Natural killer cell (primary cell): ENCODE measurements at regions of chr11 and their contacts with region 1.

Region 1: GRCh38 chr11:57530596-57531507 is at the start of gene TIMM10:
- DNase-seq: peak; percentile 74 to 97
- ATAC-seq: peak; percentile 81 to 93 (median 87)
- H3K4me3 ChIP-seq: peak within 1 kb of the TSS; percentile 65
- H3K4me3 Mint-ChIP-seq: peak within 1 kb of the TSS; percentile 99
- H3K27ac ChIP-seq: peak within 1 kb of the TSS; percentile 78
- H3K27ac Mint-ChIP-seq: peak within 1 kb of the TSS; percentile 97 to 99
- H3K4me1 ChIP-seq: peaks cover 15% of the 10 kb centered on the region
- H3K4me1 Mint-ChIP-seq: peaks cover 30 to 36% of the 10 kb centered on the region in 2 donors
- H3K27me3 ChIP-seq: no peaks in the 10 kb centered on the region
- H3K27me3 Mint-ChIP-seq: no peaks in the 10 kb centered on the region
- CTCF ChIP-seq: no peak
- total RNA-seq, gene TIMM10: 15.0 to 18.8 (median 17.1) TPM

Region 2: GRCh38 chr11:57345555-57346211 is 185.2 kb before region 1 on chr11:
- intact Hi-C with region 1: loop called (anchors 1 kb)
- DNase-seq: peak; percentile 57 to 88
- ATAC-seq: peak; percentile 69 to 87 (median 86)
- H3K4me3 ChIP-seq: no peak overlapping the region
- H3K4me3 Mint-ChIP-seq: no peak overlapping the region
- H3K27ac ChIP-seq: no peak overlapping the region
- H3K27ac Mint-ChIP-seq: no peak overlapping the region
- H3K4me1 ChIP-seq: peaks cover 17% of the 10 kb centered on the region
- H3K4me1 Mint-ChIP-seq: peaks cover 16 to 19% of the 10 kb centered on the region in 2 donors
- H3K27me3 ChIP-seq: no peaks in the 10 kb centered on the region
- H3K27me3 Mint-ChIP-seq: peaks cover 0 to under 1% of the 10 kb centered on the region in 2 donors
- CTCF ChIP-seq: peak; percentile 84

Region 3: GRCh38 chr11:57493507-57494503 is 37.0 kb before region 1 on chr11:
- intact Hi-C with region 1: loop called (anchors 1 kb)
- DNase-seq: peak; percentile 56 to 83
- ATAC-seq: peak; percentile 74 to 91 (median 87)
- H3K4me3 ChIP-seq: no peak overlapping the region
- H3K4me3 Mint-ChIP-seq: no peak overlapping the region
- H3K27ac ChIP-seq: no peak overlapping the region
- H3K27ac Mint-ChIP-seq: no peak overlapping the region
- H3K4me1 ChIP-seq: no peaks in the 10 kb centered on the region
- H3K4me1 Mint-ChIP-seq: no peaks in the 10 kb centered on the region
- H3K27me3 ChIP-seq: no peaks in the 10 kb centered on the region
- H3K27me3 Mint-ChIP-seq: no peaks in the 10 kb centered on the region
- CTCF ChIP-seq: peak; percentile 96

Region 4: GRCh38 chr11:57644748-57645688 is 114.2 kb after region 1 on chr11:
- intact Hi-C with region 1: loop called (anchors 2 kb)
- DNase-seq: peak; percentile 70 to 91
- ATAC-seq: peak; percentile 56 to 84 (median 70)
- H3K4me3 ChIP-seq: no peak overlapping the region
- H3K4me3 Mint-ChIP-seq: no peak overlapping the region
- H3K27ac ChIP-seq: no peak overlapping the region
- H3K27ac Mint-ChIP-seq: peak overlapping the region in 1 of 2 donors; percentile 35
- H3K4me1 ChIP-seq: peaks cover 34% of the 10 kb centered on the region
- H3K4me1 Mint-ChIP-seq: peaks cover 26 to 35% of the 10 kb centered on the region in 2 donors
- H3K27me3 ChIP-seq: peaks cover 38% of the 10 kb centered on the region
- H3K27me3 Mint-ChIP-seq: peaks cover 42 to 46% of the 10 kb centered on the region in 2 donors
- CTCF ChIP-seq: peak; percentile 74

Region 5: DNA sequence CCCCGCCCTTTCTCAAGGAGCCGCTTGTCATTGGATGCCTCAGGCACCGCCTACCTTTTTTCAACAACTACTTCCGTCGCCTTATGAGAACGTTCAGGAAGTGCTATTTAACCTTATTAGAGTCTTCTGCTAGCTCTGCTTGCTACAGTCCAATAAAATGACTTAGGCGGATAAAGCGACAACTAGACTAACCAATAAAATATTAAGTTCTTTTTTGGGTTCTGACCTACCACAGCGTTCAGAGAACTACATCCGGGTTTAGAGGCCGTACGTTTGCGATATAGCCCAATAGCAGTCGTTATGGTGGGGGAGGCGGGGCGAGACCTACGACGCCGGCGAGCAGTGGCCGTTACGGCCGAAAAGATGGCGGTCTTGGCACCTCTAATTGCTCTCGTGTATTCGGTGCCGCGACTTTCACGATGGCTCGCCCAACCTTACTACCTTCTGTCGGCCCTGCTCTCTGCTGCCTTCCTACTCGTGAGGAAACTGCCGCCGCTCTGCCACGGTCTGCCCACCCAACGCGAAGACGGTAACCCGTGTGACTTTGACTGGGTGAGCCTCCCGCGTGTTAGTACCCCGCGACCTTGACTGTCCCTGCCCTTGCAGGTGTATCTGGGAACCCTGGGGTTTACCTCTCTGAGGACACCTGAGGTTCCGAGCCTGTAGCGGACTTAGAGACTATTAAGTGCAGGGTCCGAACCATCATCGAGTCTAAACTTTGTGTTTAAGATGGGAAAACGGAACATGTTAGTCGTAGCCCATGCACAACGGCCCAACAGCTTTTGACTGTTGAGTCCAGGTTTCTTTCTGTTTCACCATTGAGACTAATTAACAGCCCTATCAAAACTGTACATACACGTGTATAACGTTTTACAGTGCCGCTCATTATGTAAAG is 181.7 kb after region 1 on chr11 and contains the start of gene TMX2:
- intact Hi-C with region 1: loop called (anchors 1 kb)
- DNase-seq: peak; percentile 86 to 96
- ATAC-seq: peak; percentile 88 to 96 (median 89)
- H3K4me3 ChIP-seq: peak within 1 kb of the TSS; percentile 72
- H3K4me3 Mint-ChIP-seq: peak within 1 kb of the TSS; percentile 96
- H3K27ac ChIP-seq: peak within 1 kb of the TSS; percentile 73
- H3K27ac Mint-ChIP-seq: peak within 1 kb of the TSS; percentile 93 to 94
- H3K4me1 ChIP-seq: peaks cover 19% of the 10 kb centered on the region
- H3K4me1 Mint-ChIP-seq: peaks cover 36 to 41% of the 10 kb centered on the region in 2 donors
- H3K27me3 ChIP-seq: no peaks in the 10 kb centered on the region
- H3K27me3 Mint-ChIP-seq: no peaks in the 10 kb centered on the region
- CTCF ChIP-seq: no peak
- total RNA-seq, gene TMX2: 43.6 to 70.4 (median 45.7) TPM

Region 6: DNA sequence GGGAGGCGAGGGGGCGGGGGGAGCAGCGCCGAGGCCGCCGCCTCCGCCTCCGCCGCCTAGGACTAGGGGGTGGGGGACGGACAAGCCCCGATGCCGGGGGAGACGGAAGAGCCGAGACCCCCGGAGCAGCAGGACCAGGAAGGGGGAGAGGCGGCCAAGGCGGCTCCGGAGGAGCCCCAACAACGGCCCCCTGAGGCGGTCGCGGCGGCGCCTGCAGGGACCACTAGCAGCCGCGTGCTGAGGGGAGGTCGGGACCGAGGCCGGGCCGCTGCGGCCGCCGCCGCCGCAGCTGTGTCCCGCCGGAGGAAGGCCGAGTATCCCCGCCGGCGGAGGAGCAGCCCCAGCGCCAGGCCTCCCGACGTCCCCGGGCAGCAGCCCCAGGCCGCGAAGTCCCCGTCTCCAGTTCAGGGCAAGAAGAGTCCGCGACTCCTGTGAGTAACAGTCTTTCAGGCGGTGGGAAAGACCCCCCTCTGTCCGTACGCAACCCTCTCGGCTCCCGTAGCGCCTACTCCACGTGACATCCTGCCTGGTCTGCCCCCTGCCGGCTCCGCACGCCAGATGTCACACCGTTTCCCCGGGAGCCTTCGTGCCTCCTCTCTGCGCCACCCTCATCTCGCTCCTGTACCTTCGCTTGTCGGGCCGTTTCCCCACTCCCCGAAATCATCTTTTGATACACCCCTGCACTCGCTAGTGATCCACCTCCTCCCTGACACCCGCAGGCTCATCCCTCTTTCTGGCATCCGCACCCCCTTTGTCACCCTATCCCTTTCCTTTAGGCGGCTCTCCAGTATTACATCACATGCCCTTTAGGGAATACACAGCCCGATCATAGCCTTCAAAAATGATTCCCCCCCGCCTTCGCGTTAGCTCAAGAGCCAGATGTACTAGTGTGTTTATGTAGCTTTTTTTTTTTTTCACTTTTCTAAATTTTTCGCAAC is 1048.6 kb after region 1 on chr11:
- intact Hi-C with region 1: loop called (anchors 2 kb)
- DNase-seq: peak; percentile 91 to 97
- ATAC-seq: peak; percentile 32 to 67 (median 47)
- H3K4me3 ChIP-seq: peak overlapping the region; percentile 90
- H3K4me3 Mint-ChIP-seq: peak overlapping the region; percentile 91
- H3K27ac ChIP-seq: peak overlapping the region; percentile 99
- H3K27ac Mint-ChIP-seq: peak overlapping the region; percentile 99 to 100
- H3K4me1 ChIP-seq: peaks cover 29% of the 10 kb centered on the region
- H3K4me1 Mint-ChIP-seq: peaks cover 77 to 81% of the 10 kb centered on the region in 2 donors
- H3K27me3 ChIP-seq: no peaks in the 10 kb centered on the region
- H3K27me3 Mint-ChIP-seq: peaks cover 0 to 3% of the 10 kb centered on the region in 2 donors
- CTCF ChIP-seq: peak; percentile 80